HCT116 (cell line): ENCODE measurements at regions of chr3 and their contacts with region 1.

Region 1: GRCh38 chr3:139519998-139520737 is 19.4 kb downstream of the RBP1 start:
- DNase-seq: peak; percentile 69
- ATAC-seq: peak; percentile 88
- H3K4me3 ChIP-seq: peak overlapping the region in 1 of 2 experiments; percentile 17; a peak in 2 of 4 replicates
- H3K27ac ChIP-seq: no peak overlapping the region
- H3K4me1 ChIP-seq: peaks cover 0 to 19% of the 10 kb centered on the region in 2 experiments; a peak in 3 of 4 replicates
- H3K27me3 ChIP-seq: no peaks in the 10 kb centered on the region
- CTCF ChIP-seq: peak; percentile 75 to 91 (median 89)
- POLR2A ChIP-seq: peak; percentile 84
- RAD21 ChIP-seq: peak; percentile 47

Region 2: DNA sequence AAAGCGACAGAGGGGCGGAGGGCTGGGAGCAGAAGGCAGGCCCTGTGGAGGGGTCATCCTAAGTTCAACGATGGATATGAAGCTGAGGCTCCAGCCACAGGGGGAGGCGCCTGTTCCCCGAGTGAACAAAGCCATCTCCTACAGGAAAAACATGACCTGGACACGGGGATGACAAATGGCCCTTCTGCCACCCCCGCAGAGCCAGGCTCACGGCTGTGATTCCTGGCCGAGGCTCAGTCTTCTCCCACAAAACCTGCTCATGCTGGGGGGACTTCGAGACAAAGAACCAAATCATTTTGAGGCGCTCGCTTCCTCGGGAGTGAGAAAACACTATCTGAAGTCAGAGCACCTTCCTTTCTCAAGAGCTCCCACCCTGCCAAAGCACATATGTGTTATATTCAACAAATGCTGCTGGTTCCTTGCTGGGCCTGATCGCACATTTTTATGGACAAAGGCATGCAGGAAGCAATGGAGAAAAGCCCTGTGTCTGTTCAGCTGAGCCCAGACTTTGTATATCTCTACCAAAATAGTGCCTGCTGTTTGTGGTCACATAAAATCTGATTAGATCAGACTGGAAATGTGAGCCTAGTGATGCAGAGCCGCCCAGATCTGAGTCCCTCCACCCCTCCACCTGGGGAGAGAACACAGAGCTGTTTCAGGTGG is 13.7 kb after region 1 on chr3:
- CTCF ChIA-PET with region 1: interaction called, 14 read pairs
- POLR2A ChIA-PET with region 1: interaction called, 3 read pairs
- RAD21 ChIA-PET with region 1: no interaction called
- intact Hi-C with region 1: no loop called
- DNase-seq: peak; percentile 69
- ATAC-seq: peak; percentile 55
- H3K4me3 ChIP-seq: peak overlapping the region; percentile 6 to 35
- H3K27ac ChIP-seq: peak overlapping the region; percentile 81
- H3K4me1 ChIP-seq: peaks cover 63 to 66% of the 10 kb centered on the region in 2 experiments
- H3K27me3 ChIP-seq: no peaks in the 10 kb centered on the region
- CTCF ChIP-seq: no peak
- POLR2A ChIP-seq: no peak
- RAD21 ChIP-seq: no peak

Region 3: GRCh38 chr3:139561959-139562676 is 42.0 kb after region 1 on chr3:
- CTCF ChIA-PET with region 1: interaction called, 4 read pairs
- POLR2A ChIA-PET with region 1: no interaction called
- RAD21 ChIA-PET with region 1: no interaction called
- intact Hi-C with region 1: loop called (anchors 1 kb)
- DNase-seq: peak; percentile 56
- ATAC-seq: peak; percentile 95
- H3K4me3 ChIP-seq: no peak overlapping the region
- H3K27ac ChIP-seq: no peak overlapping the region
- H3K4me1 ChIP-seq: no peaks in the 10 kb centered on the region
- H3K27me3 ChIP-seq: no peaks in the 10 kb centered on the region
- CTCF ChIP-seq: peak; percentile 73 to 90 (median 86)
- POLR2A ChIP-seq: no peak
- RAD21 ChIP-seq: peak; percentile 97